Endothelial cell of umbilical vein (primary cell): ENCODE measurements at regions of chr6 and their contacts with region 1.

Region 1: GRCh38 chr6:139375232-139376016 is 976 bp upstream of the CITED2 start:
- DNase-seq: peak; percentile 94
- H3K4me3 ChIP-seq: peak overlapping the region; percentile 57 to 93 (median 62)
- H3K27ac ChIP-seq: peak overlapping the region; percentile 89
- H3K4me1 ChIP-seq: peaks cover 24% of the 10 kb centered on the region
- H3K27me3 ChIP-seq: no peaks in the 10 kb centered on the region
- CTCF ChIP-seq: no peak
- POLR2A ChIP-seq: no peak

Region 2: GRCh38 chr6:139402876-139403386 is 27.5 kb after region 1 on chr6:
- CTCF ChIA-PET with region 1: no interaction called
- POLR2A ChIA-PET with region 1: interaction called, 3 read pairs
- dilution Hi-C with region 1: no loop called
- intact Hi-C with region 1: loop called (anchors 2 kb)
- DNase-seq: peak; percentile 67
- H3K4me3 ChIP-seq: no peak overlapping the region
- H3K27ac ChIP-seq: peak overlapping the region; percentile 50
- H3K4me1 ChIP-seq: peaks cover 4% of the 10 kb centered on the region
- H3K27me3 ChIP-seq: no peaks in the 10 kb centered on the region
- CTCF ChIP-seq: no peak
- POLR2A ChIP-seq: no peak

Region 3: GRCh38 chr6:139588076-139588639 is 212.7 kb after region 1 on chr6:
- CTCF ChIA-PET with region 1: interaction called, 3 read pairs
- POLR2A ChIA-PET with region 1: interaction called, 10 read pairs
- dilution Hi-C with region 1: no loop called
- intact Hi-C with region 1: no loop called
- DNase-seq: peak; percentile 67
- H3K4me3 ChIP-seq: no peak overlapping the region
- H3K27ac ChIP-seq: peak overlapping the region; percentile 34
- H3K4me1 ChIP-seq: peaks cover 22% of the 10 kb centered on the region
- H3K27me3 ChIP-seq: no peaks in the 10 kb centered on the region
- CTCF ChIP-seq: no peak
- POLR2A ChIP-seq: no peak

Region 4: DNA sequence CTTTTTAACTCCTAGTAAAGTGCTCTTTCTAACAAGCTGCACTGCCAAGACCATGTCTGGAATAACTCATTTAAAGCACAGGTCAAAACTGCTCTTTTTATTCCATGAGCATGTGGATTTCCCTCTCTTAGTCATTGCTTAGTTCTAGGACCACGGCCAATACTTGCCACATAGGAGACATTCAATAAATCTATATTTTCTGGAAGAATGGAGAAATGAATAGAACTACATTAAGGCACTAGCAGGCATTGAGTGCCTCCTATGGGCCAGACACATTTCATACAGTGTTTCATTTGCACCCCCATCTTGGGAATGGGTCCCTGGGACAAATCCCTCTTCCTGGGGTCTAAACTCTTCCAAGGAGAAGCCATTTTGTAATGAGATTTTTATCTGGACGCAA is 551.8 kb after region 1 on chr6:
- CTCF ChIA-PET with region 1: no interaction called
- POLR2A ChIA-PET with region 1: no interaction called
- dilution Hi-C with region 1: no loop called
- intact Hi-C with region 1: loop called (anchors 5 kb)
- DNase-seq: peak; percentile 22
- H3K4me3 ChIP-seq: no peak overlapping the region
- H3K27ac ChIP-seq: no peak overlapping the region
- H3K4me1 ChIP-seq: no peaks in the 10 kb centered on the region
- H3K27me3 ChIP-seq: no peaks in the 10 kb centered on the region
- CTCF ChIP-seq: no peak
- POLR2A ChIP-seq: no peak

Region 5: GRCh38 chr6:140138311-140139010 is 763.0 kb after region 1 on chr6:
- CTCF ChIA-PET with region 1: no interaction called
- POLR2A ChIA-PET with region 1: interaction called, 3 read pairs
- dilution Hi-C with region 1: no loop called
- intact Hi-C with region 1: loop called (anchors 2 kb)
- DNase-seq: peak; percentile 70
- H3K4me3 ChIP-seq: no peak overlapping the region
- H3K27ac ChIP-seq: peak overlapping the region; percentile 98
- H3K4me1 ChIP-seq: peaks cover 10% of the 10 kb centered on the region
- H3K27me3 ChIP-seq: no peaks in the 10 kb centered on the region
- CTCF ChIP-seq: no peak
- POLR2A ChIP-seq: no peak

Region 6: GRCh38 chr6:140572129-140572528 is 1196.7 kb after region 1 on chr6:
- CTCF ChIA-PET with region 1: no interaction called
- POLR2A ChIA-PET with region 1: no interaction called
- dilution Hi-C with region 1: no loop called
- intact Hi-C with region 1: loop called (anchors 2 kb)
- DNase-seq: peak; percentile 96
- H3K4me3 ChIP-seq: no peak overlapping the region
- H3K27ac ChIP-seq: peak overlapping the region; percentile 84
- H3K4me1 ChIP-seq: peaks cover 24% of the 10 kb centered on the region
- H3K27me3 ChIP-seq: no peaks in the 10 kb centered on the region
- CTCF ChIP-seq: no peak
- POLR2A ChIP-seq: peak; percentile 44

Region 7: GRCh38 chr6:141326426-141326825 is 1951.0 kb after region 1 on chr6:
- CTCF ChIA-PET with region 1: no interaction called
- POLR2A ChIA-PET with region 1: no interaction called
- dilution Hi-C with region 1: no loop called
- intact Hi-C with region 1: loop called (anchors 10 kb)
- DNase-seq: peak; percentile 94
- H3K4me3 ChIP-seq: peak overlapping the region in 2 of 3 experiments; percentile 3 to 34
- H3K27ac ChIP-seq: peak overlapping the region; percentile 82
- H3K4me1 ChIP-seq: peaks cover 4% of the 10 kb centered on the region
- H3K27me3 ChIP-seq: no peaks in the 10 kb centered on the region
- CTCF ChIP-seq: no peak
- POLR2A ChIP-seq: no peak